ENCODE measurements at regions of chr1 and their contacts with region 1.

Region 1: DNA sequence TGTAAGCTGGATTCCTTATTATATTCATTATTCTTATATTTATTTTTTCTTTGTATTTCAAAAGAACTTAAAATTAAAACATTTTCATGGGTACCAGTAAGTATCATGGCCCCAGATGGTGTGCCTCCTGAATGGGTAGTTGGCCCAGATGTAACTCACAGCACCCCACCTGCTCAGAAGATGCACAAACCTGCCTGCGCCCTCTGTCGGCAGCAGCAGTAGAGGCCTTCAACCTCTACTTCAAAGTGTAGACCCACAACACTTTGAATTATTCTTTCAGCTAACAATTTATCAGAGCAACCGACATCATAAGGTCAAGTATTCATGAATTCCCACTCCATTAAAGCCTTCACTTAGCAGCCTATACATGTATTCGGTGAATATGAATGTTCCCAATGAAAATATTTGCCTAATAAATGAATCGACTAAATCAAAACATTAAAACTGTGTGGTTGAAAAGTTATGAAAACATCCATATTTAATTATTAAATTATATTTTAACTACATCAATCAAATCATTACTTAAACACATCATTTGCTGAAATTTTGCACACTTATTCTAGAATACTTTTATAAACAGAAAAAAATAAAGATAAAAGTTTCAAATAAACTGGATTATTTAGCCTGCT is 25.4 kb downstream of the PIGM start:
- DNase-seq: peak; percentile 86
- ATAC-seq: peak; percentile 95
- H3K4me3 Mint-ChIP-seq: no peak overlapping the region
- H3K27ac Mint-ChIP-seq: no peak overlapping the region
- H3K4me1 Mint-ChIP-seq: no peaks in the 10 kb centered on the region
- H3K27me3 Mint-ChIP-seq: peaks cover 8% of the 10 kb centered on the region; the same call in 1 of the 2 replicates
- CTCF ChIP-seq: peak; percentile 93

Region 2: DNA sequence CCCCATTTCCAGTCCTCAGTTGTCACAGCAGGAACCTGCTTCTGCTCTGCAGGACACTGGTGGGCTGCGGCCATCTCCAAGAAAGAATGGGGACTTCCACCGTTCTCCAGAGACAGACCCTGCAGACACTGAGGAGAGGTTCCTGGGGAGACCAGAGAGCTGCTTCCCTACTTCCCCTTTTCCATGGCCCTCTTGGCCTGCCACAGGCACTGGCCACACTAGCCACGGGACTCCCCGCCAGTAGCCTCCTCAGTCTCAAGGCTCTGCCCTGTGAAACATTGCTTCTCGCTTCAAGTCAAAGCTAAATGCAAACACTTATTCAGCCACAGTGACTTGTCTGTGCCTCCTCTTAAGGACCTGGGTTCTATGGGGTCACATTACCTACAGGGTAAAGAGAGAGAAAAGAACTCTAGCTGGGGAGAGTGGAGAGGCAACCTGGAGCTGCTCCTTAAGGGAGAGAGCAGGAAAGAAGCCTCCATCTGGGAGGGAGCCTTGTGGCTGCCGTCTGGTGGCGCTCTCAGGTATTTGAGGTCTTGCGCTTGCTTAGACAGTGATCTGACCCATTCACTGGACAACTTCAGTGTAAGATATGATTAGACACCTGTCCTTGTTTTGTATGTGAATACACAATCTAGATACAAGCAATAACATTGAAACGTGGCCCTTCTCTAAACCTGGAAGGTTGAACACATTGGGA is 185.1 kb before region 1 on chr1:
- CTCF ChIA-PET with region 1: interaction called, 16 read pairs
- POLR2A ChIA-PET with region 1: no interaction called
- DNase-seq: peak; percentile 25
- ATAC-seq: peak; percentile 68
- H3K4me3 Mint-ChIP-seq: no peak overlapping the region
- H3K27ac Mint-ChIP-seq: no peak overlapping the region
- H3K4me1 Mint-ChIP-seq: peaks cover 15% of the 10 kb centered on the region
- H3K27me3 Mint-ChIP-seq: peaks cover 11% of the 10 kb centered on the region
- CTCF ChIP-seq: no peak

Region 3: GRCh38 chr1:159891275-159892157 is 114.9 kb before region 1 on chr1:
- CTCF ChIA-PET with region 1: interaction called, 188 read pairs
- POLR2A ChIA-PET with region 1: no interaction called
- DNase-seq: peak; percentile 82
- ATAC-seq: peak; percentile 93
- H3K4me3 Mint-ChIP-seq: no peak overlapping the region
- H3K27ac Mint-ChIP-seq: no peak overlapping the region
- H3K4me1 Mint-ChIP-seq: peaks cover 9% of the 10 kb centered on the region
- H3K27me3 Mint-ChIP-seq: peaks cover 2% of the 10 kb centered on the region; the same call in 1 of the 2 replicates
- CTCF ChIP-seq: peak; percentile 79

Region 4: GRCh38 chr1:159945483-159946241 is 60.8 kb before region 1 on chr1 and contains the start of gene IGSF9:
- CTCF ChIA-PET with region 1: interaction called, 202 read pairs
- POLR2A ChIA-PET with region 1: interaction called, 7 read pairs
- DNase-seq: peak; percentile 98
- ATAC-seq: peak; percentile 90
- H3K4me3 Mint-ChIP-seq: peak within 1 kb of the TSS; percentile 89
- H3K27ac Mint-ChIP-seq: peak within 1 kb of the TSS; percentile 86
- H3K4me1 Mint-ChIP-seq: peaks cover 43% of the 10 kb centered on the region
- H3K27me3 Mint-ChIP-seq: no peaks in the 10 kb centered on the region; the same call in 1 of the 2 replicates
- CTCF ChIP-seq: 0 out of 2 replicates have a peak, but pooled peaks have one; percentile 24
- total RNA-seq, gene IGSF9: 16.4 to 19.4 TPM (median 18.8 TPM) in 3 replicates

Region 5: DNA sequence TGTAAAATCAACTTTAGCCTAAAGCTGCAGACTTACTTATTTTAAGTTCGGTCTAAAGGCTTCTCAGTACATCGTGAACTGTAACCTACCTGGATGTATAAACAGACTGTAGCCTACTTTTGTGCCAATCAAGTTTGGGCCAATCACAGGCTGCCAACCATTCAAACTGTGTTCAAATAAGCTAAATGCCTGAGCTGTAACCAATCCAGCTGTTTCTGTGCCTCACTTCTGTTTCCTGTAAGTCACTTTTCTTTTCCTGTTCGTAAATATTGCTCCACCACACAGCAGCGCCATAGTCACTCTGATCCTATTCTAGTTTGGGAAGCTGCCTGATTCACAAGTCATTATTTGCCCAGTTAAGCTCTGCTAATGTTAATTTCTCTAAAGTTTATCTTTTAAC is 14.9 kb before region 1 on chr1:
- CTCF ChIA-PET with region 1: interaction called, 19 read pairs
- POLR2A ChIA-PET with region 1: no interaction called
- DNase-seq: no peak
- ATAC-seq: no peak
- H3K4me3 Mint-ChIP-seq: no peak overlapping the region
- H3K27ac Mint-ChIP-seq: no peak overlapping the region
- H3K4me1 Mint-ChIP-seq: peaks cover 10% of the 10 kb centered on the region
- H3K27me3 Mint-ChIP-seq: no peaks in the 10 kb centered on the region; the same call in 1 of the 2 replicates
- CTCF ChIP-seq: no peak

Region 6: GRCh38 chr1:160078512-160079195 is 72.2 kb after region 1 on chr1:
- CTCF ChIA-PET with region 1: interaction called, 22 read pairs
- POLR2A ChIA-PET with region 1: no interaction called
- DNase-seq: peak; percentile 78
- ATAC-seq: peak; percentile 89
- H3K4me3 Mint-ChIP-seq: no peak overlapping the region
- H3K27ac Mint-ChIP-seq: no peak overlapping the region
- H3K4me1 Mint-ChIP-seq: peaks cover 4% of the 10 kb centered on the region
- H3K27me3 Mint-ChIP-seq: peaks cover 82% of the 10 kb centered on the region
- CTCF ChIP-seq: peak; percentile 95

Region 7: GRCh38 chr1:160307118-160307854 is 300.9 kb after region 1 on chr1:
- CTCF ChIA-PET with region 1: no interaction called
- POLR2A ChIA-PET with region 1: no interaction called
- DNase-seq: peak; percentile 67
- ATAC-seq: peak; percentile 100
- H3K4me3 Mint-ChIP-seq: peak overlapping the region; percentile 35
- H3K27ac Mint-ChIP-seq: peak overlapping the region; percentile 74; the same call in 1 of the 2 replicates
- H3K4me1 Mint-ChIP-seq: peaks cover 33% of the 10 kb centered on the region
- H3K27me3 Mint-ChIP-seq: no peaks in the 10 kb centered on the region
- CTCF ChIP-seq: no peak